Naive thymus-derived CD4-positive, alpha-beta T cell (primary cell): ENCODE measurements at regions of chr7 and their contacts with region 1.

Region 1: DNA sequence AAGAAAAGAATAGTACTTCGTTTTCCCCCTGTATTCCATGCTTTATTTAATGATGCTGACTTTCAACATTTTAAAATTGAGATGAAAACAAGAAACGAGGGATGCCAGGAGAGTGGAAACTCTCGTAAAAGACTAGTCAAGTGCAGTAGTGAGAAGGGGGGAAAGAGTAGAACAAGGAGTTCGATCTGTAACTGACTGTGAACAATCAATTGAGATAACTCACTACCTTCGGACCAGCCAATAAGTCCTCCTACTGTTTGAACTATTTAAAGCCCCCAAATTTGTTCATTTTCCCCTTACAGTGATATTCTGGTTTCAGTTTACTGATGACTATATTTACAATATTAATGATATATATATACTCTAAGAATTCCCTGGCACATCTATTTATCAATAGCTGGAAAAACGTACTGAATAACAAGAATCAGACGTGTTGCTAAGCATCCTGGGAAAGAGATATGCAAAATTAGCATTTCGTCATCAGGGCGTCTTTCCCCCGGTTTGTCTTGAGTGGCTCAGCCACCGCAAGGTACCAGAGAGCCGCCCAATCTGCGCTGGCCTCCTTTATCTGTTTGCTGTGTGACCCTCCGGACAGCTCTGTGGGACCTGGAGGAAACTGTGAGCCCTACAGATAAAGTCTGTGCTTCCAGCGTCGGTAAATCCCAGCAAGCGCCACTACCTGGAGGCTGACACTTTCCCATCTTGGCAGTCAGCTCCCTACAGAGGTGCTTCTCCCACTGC is 41.1 kb downstream of the PDIA4 start:
- DNase-seq: peak; percentile 43 to 91 (median 88)
- ATAC-seq: peak; percentile 87
- H3K4me3 ChIP-seq: peak overlapping the region; percentile 97
- H3K4me3 Mint-ChIP-seq: peak overlapping the region; percentile 92 to 99 (median 98)
- H3K27ac ChIP-seq: peak overlapping the region; percentile 85
- H3K27ac Mint-ChIP-seq: peak overlapping the region; percentile 90 to 97 (median 96)
- H3K4me1 ChIP-seq: peaks cover 26% of the 10 kb centered on the region in 2 donors
- H3K4me1 Mint-ChIP-seq: peaks cover 26 to 53% (median 48%) of the 10 kb centered on the region in 7 donors
- H3K27me3 ChIP-seq: no peaks in the 10 kb centered on the region
- H3K27me3 Mint-ChIP-seq: peaks cover 0 to 27% (median 0%) of the 10 kb centered on the region in 5 donors

Region 2: GRCh38 chr7:148884299-148885022 is 102.7 kb before region 1 on chr7:
- CTCF ChIA-PET with region 1: no interaction called
- POLR2A ChIA-PET with region 1: interaction called, 3 read pairs
- intact Hi-C with region 1: loop called (anchors 1 kb)
- DNase-seq: peak; percentile 89 to 96 (median 94)
- ATAC-seq: peak; percentile 94
- H3K4me3 ChIP-seq: peak overlapping the region; percentile 57
- H3K4me3 Mint-ChIP-seq: peak overlapping the region; percentile 85 to 98 (median 94)
- H3K27ac ChIP-seq: peak overlapping the region; percentile 97
- H3K27ac Mint-ChIP-seq: peak overlapping the region; percentile 89 to 98 (median 93)
- H3K4me1 ChIP-seq: peaks cover 6 to 7% of the 10 kb centered on the region in 2 donors
- H3K4me1 Mint-ChIP-seq: peaks cover 0 to 45% (median 29%) of the 10 kb centered on the region in 7 donors
- H3K27me3 ChIP-seq: no peaks in the 10 kb centered on the region
- H3K27me3 Mint-ChIP-seq: no peaks in the 10 kb centered on the region

Region 3: DNA sequence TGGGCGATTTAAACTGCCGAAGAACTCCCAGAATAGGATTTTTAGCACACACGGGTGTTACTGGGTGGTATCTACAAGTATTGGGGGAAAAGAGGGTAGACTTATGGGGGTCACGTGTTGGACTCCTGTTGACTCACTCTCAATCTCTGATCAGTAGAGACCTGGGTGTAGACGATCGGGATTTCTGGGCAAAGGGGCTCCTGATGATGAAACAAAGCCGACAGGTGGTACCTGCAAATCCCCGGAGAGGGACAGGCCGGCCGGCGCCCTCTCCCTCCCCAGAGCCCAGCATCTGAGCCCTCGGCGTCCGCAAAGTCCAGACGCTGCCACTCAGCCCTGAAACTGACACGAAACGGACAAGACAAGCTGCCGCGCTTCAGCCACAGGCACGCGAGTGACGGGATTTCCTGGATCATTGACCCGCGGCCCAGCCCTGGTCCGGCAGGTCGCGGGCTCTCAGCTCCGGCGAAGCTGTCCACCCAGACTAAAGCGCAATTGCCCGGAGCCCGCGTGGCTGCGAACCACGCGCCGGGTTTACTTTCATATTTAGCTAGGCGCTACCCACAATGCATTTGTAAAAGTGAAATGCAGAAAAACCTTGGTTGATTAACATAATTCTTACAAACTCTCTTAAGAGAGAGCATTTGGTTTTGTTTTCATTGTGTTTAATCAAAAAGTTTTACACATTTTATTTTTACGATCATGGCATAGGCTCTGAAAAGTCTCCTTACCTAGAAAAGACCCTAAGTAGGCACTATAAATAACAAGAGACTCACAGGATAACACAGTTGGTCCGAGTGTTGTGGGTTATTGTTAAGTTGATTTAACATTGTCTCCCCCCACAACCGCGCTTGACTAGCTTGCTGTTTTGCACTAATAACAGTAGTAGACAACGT is 46.2 kb before region 1 on chr7:
- CTCF ChIA-PET with region 1: no interaction called
- POLR2A ChIA-PET with region 1: interaction called, 3 read pairs
- intact Hi-C with region 1: loop called (anchors 1 kb)
- DNase-seq: peak; percentile 45 to 86 (median 76)
- ATAC-seq: peak; percentile 88
- H3K4me3 ChIP-seq: peak overlapping the region; percentile 95
- H3K4me3 Mint-ChIP-seq: peak overlapping the region; percentile 86 to 99 (median 96)
- H3K27ac ChIP-seq: peak overlapping the region; percentile 88
- H3K27ac Mint-ChIP-seq: peak overlapping the region; percentile 94 to 99 (median 98)
- H3K4me1 ChIP-seq: peaks cover 7 to 12% of the 10 kb centered on the region in 2 donors
- H3K4me1 Mint-ChIP-seq: peaks cover 8 to 25% (median 20%) of the 10 kb centered on the region in 7 donors
- H3K27me3 ChIP-seq: no peaks in the 10 kb centered on the region
- H3K27me3 Mint-ChIP-seq: no peaks in the 10 kb centered on the region

Region 4: GRCh38 chr7:149005241-149006050 is 18.3 kb after region 1 on chr7:
- CTCF ChIA-PET with region 1: interaction called, 16 read pairs
- POLR2A ChIA-PET with region 1: interaction called, 3 read pairs
- intact Hi-C with region 1: loop called in 1 of 2 experiments (anchors 1 kb)
- DNase-seq: peak; percentile 57 to 80 (median 73)
- ATAC-seq: peak; percentile 96
- H3K4me3 ChIP-seq: no peak overlapping the region
- H3K4me3 Mint-ChIP-seq: no peak overlapping the region
- H3K27ac ChIP-seq: no peak overlapping the region
- H3K27ac Mint-ChIP-seq: peak overlapping the region in 5 of 9 donors; percentile 65 to 90 (median 74)
- H3K4me1 ChIP-seq: no peaks in the 10 kb centered on the region
- H3K4me1 Mint-ChIP-seq: peaks cover 0 to 9% (median 5%) of the 10 kb centered on the region in 7 donors
- H3K27me3 ChIP-seq: no peaks in the 10 kb centered on the region
- H3K27me3 Mint-ChIP-seq: no peaks in the 10 kb centered on the region

Region 5: GRCh38 chr7:149071641-149072437 is 84.7 kb after region 1 on chr7:
- CTCF ChIA-PET with region 1: no interaction called
- POLR2A ChIA-PET with region 1: no interaction called
- intact Hi-C with region 1: loop called in 1 of 2 experiments (anchors 5 kb)
- DNase-seq: peak in 8 of 9 donors; percentile 31 to 57 (median 46)
- ATAC-seq: peak; percentile 90
- H3K4me3 ChIP-seq: no peak overlapping the region
- H3K4me3 Mint-ChIP-seq: peak overlapping the region in 5 of 10 donors; percentile 16 to 51 (median 35)
- H3K27ac ChIP-seq: peak overlapping the region; percentile 58
- H3K27ac Mint-ChIP-seq: peak overlapping the region in 7 of 9 donors; percentile 25 to 81 (median 76)
- H3K4me1 ChIP-seq: no peaks in the 10 kb centered on the region
- H3K4me1 Mint-ChIP-seq: peaks cover 8 to 32% (median 15%) of the 10 kb centered on the region in 7 donors
- H3K27me3 ChIP-seq: no peaks in the 10 kb centered on the region
- H3K27me3 Mint-ChIP-seq: no peaks in the 10 kb centered on the region

Region 6: DNA sequence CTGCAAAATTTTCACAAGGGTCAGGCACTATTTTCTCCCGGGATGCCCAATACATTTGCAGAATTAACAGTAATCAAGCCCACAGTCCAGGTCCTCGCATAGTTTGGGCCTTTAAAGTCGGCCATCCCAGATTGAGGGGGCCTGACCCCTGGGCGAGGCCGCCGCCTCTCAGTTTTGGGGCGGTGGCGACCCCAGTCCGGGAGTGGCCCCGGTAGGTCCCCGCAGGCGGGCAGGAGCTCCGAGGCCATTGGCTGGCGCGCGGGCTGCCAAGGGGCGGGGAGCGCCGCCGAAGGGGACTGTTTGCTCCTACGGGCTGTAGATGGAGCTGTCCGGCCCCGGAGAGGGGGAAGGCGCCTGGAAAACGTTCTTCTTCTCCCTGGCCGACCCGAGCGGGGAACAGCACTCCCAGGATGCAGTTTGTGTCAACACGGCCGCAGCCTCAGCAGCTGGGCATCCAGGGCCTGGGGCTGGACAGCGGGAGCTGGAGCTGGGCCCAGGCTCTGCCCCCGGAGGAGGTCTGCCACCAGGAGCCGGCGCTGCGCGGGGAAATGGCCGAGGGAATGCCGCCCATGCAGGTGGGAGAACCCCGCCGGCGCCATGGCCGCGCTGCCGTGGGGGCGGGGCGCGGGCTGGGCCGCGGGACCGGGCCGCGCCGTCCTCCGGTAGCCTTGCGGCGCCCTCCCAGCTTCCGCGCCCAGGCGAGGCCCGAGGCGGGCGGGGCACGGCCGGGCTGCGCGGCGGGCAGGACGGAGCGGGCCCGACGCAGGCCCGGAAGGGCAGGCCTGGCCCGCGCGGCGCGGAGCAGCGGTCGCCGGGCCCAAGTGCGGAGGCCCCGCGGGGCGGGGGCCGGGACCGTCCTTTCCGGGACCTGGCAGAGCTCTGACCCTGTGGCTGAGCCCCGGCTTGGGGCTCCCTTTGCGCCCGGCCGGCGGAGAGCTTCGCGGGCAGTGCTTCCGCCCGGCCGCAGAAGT is 208.3 kb after region 1 on chr7 and contains the start of gene ZNF282:
- CTCF ChIA-PET with region 1: no interaction called
- POLR2A ChIA-PET with region 1: no interaction called
- intact Hi-C with region 1: loop called in 1 of 2 experiments (anchors 5 kb)
- DNase-seq: peak; percentile 43 to 84 (median 56)
- ATAC-seq: peak; percentile 91
- H3K4me3 ChIP-seq: peak within 1 kb of the TSS; percentile 82
- H3K4me3 Mint-ChIP-seq: peak within 1 kb of the TSS; percentile 83 to 94 (median 90)
- H3K27ac ChIP-seq: peak within 1 kb of the TSS; percentile 77
- H3K27ac Mint-ChIP-seq: peak within 1 kb of the TSS; percentile 79 to 97 (median 86)
- H3K4me1 ChIP-seq: peaks cover 6 to 8% of the 10 kb centered on the region in 2 donors
- H3K4me1 Mint-ChIP-seq: peaks cover 20 to 52% (median 47%) of the 10 kb centered on the region in 7 donors
- H3K27me3 ChIP-seq: no peaks in the 10 kb centered on the region
- H3K27me3 Mint-ChIP-seq: peaks cover 0 to 3% (median 0%) of the 10 kb centered on the region in 5 donors
- total RNA-seq, gene ZNF282: 12.1 to 36.7 (median 15.1) TPM

Region 7: DNA sequence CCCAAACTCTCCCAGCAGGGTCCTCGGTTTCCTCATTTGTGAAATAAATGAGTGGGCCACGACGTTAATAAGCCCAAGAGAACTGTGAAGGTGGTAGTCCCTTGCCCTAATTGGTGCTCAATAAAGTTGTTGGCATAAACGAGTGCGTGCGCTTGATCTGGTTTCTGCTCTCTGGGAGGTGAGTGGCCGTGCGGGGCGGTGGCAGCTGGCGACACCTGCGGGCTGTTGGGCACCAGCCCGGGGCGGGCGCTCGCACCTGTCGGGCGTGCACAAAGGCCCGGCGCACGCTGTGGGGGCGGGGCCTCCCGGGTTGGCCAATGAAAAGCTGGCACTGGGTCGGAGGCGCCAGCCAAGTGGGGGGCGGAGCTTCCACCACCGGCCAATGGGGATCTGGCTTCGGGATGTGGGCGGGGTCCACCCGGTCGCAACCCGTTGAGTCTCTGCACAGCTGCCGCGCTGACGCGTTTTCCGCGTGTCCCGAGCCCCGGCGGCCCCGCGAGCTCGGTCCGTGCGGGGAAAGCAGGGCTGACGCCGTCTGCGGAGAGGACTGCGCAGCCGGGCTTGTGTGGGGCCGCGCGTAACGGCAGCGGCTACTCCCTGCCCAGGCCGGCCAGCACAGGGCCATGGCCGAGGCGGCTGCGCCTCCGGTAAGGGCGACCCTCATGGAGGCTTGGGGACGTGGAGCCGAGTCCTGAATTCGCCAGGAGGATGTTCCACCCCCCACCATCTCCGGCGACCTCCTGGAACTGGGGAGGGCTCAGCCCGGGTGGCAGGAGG is 297.9 kb after region 1 on chr7:
- CTCF ChIA-PET with region 1: no interaction called
- POLR2A ChIA-PET with region 1: no interaction called
- intact Hi-C with region 1: loop called in 1 of 2 experiments (anchors 10 kb)
- DNase-seq: peak; percentile 96 to 99 (median 98)
- ATAC-seq: peak; percentile 98
- H3K4me3 ChIP-seq: peak overlapping the region; percentile 80
- H3K4me3 Mint-ChIP-seq: peak overlapping the region; percentile 79 to 97 (median 92)
- H3K27ac ChIP-seq: peak overlapping the region; percentile 72
- H3K27ac Mint-ChIP-seq: peak overlapping the region; percentile 76 to 96 (median 93)
- H3K4me1 ChIP-seq: peaks cover 30 to 36% of the 10 kb centered on the region in 2 donors
- H3K4me1 Mint-ChIP-seq: peaks cover 26 to 55% (median 46%) of the 10 kb centered on the region in 7 donors
- H3K27me3 ChIP-seq: no peaks in the 10 kb centered on the region
- H3K27me3 Mint-ChIP-seq: no peaks in the 10 kb centered on the region